ENCODE measurements at regions of chr7 and their contacts with region 1.

Region 1: DNA sequence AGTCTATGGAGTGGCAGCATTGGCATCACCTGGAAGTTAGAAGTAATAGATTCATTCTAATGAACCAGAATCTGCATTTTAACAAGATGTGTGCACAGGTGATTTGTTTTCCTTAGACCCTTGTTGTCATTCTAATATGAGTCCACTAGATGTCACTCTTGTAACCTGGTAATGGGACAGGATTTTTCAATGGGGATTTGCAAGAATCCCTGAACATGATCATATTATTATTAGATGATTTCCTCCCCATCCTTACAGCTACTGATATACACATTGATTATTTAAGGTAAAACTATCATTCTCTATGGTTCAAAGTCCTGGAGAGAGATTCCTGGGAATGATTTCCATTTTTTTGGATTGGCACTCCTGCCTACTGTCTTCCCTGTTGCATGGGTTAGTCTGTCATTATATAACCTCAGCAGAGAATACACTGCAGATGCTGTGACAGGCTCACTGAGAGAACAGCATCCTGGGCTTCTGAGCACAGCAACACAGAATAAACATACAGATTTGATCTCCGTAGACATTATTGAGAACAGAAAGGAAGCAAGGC is 194.9 kb downstream of the SUGCT start:
- DNase-seq: peak; percentile 41
- ATAC-seq: peak; percentile 58
- H3K4me3 ChIP-seq: no peak overlapping the region
- H3K27ac ChIP-seq: no peak overlapping the region
- H3K4me1 ChIP-seq: no peaks in the 10 kb centered on the region
- H3K27me3 ChIP-seq: no peaks in the 10 kb centered on the region
- CTCF ChIP-seq: peak; percentile 56 to 82 (median 60); a peak in 5 of 6 replicates
- POLR2A ChIP-seq: no peak
- RAD21 ChIP-seq: peak; percentile 83

Region 2: GRCh38 chr7:40033826-40034225 is 295.9 kb before region 1 on chr7:
- CTCF ChIA-PET with region 1: no interaction called
- POLR2A ChIA-PET with region 1: no interaction called
- RAD21 ChIA-PET with region 1: no interaction called
- intact Hi-C with region 1: no loop called
- DNase-seq: no peak
- ATAC-seq: no peak
- H3K4me3 ChIP-seq: no peak overlapping the region
- H3K27ac ChIP-seq: no peak overlapping the region
- H3K4me1 ChIP-seq: no peaks in the 10 kb centered on the region
- H3K27me3 ChIP-seq: no peaks in the 10 kb centered on the region
- CTCF ChIP-seq: no peak
- POLR2A ChIP-seq: no peak
- RAD21 ChIP-seq: no peak

Region 3: GRCh38 chr7:40604601-40605438 is 275.1 kb after region 1 on chr7:
- CTCF ChIA-PET with region 1: no interaction called
- POLR2A ChIA-PET with region 1: no interaction called
- RAD21 ChIA-PET with region 1: no interaction called
- intact Hi-C with region 1: loop called (anchors 1 kb)
- DNase-seq: peak; percentile 10
- ATAC-seq: peak; percentile 98
- H3K4me3 ChIP-seq: no peak overlapping the region
- H3K27ac ChIP-seq: no peak overlapping the region
- H3K4me1 ChIP-seq: no peaks in the 10 kb centered on the region
- H3K27me3 ChIP-seq: no peaks in the 10 kb centered on the region
- CTCF ChIP-seq: peak; percentile 53 to 81 (median 81); a peak in 5 of 6 replicates
- POLR2A ChIP-seq: no peak
- RAD21 ChIP-seq: peak; percentile 69

Region 4: DNA sequence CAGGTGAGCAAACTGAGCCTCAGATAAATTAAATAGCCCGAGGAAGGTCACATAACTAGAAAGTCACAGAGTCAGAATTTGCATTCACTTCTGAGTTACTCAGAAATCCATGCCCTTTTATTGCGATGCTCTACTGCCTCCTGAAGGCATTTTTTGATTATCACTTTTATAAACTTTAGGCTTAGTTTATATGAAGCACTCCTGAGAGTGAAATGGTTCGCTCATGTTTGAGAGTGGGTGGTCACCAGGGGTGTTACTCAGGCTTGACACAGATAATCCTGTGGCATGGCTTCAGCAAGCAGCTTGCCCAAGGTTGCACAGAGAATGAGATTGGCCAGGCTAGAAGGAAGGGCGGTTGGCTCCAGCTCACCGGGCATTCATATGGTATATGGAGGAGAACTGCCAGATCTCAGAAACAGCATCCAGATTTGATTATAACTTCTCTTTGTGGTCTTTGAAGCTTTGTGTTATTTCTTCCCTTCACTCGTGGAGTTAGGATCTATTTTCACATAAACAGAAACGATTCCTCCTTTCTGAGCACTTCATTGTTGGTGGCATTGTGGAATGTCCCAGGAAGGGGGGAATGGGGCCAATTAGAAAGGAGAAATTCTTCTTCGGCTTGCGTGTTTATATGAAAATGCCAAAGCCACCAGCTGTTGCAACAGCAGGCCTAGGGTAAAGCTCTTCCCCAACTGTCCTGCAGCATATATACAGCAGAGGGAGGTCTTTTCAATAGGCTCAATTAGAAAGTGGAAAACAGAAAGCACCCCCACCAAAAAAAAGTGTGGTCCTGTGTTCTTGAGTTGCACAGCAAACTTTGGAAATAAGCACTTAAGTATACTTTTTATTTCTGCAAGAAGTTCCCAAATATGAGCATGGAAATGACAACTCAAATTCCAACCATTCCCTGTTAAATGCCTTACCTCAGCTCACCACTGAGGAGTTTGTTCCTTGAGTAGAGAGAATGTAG is 433.9 kb after region 1 on chr7:
- CTCF ChIA-PET with region 1: no interaction called
- POLR2A ChIA-PET with region 1: no interaction called
- RAD21 ChIA-PET with region 1: no interaction called
- intact Hi-C with region 1: loop called (anchors 1 kb)
- DNase-seq: no peak
- ATAC-seq: peak; percentile 40
- H3K4me3 ChIP-seq: no peak overlapping the region
- H3K27ac ChIP-seq: no peak overlapping the region
- H3K4me1 ChIP-seq: no peaks in the 10 kb centered on the region
- H3K27me3 ChIP-seq: no peaks in the 10 kb centered on the region; the same call in 1 of the 2 replicates
- CTCF ChIP-seq: peak in 2 of 3 experiments; percentile 11 to 13; a peak in 1 of 6 replicates
- POLR2A ChIP-seq: no peak
- RAD21 ChIP-seq: peak; percentile 46

Region 5: GRCh38 chr7:41705109-41705901 is 1375.6 kb after region 1 on chr7:
- CTCF ChIA-PET with region 1: interaction called, 3 read pairs
- POLR2A ChIA-PET with region 1: no interaction called
- RAD21 ChIA-PET with region 1: no interaction called
- intact Hi-C with region 1: loop called (anchors 2 kb)
- DNase-seq: no peak
- ATAC-seq: peak; percentile 98
- H3K4me3 ChIP-seq: peak overlapping the region; percentile 41 to 52
- H3K27ac ChIP-seq: no peak overlapping the region; the same call in 1 of the 2 replicates
- H3K4me1 ChIP-seq: peaks cover 2 to 7% of the 10 kb centered on the region in 2 experiments; a peak in 2 of 4 replicates
- H3K27me3 ChIP-seq: no peaks in the 10 kb centered on the region
- CTCF ChIP-seq: peak; percentile 45 to 59 (median 57); a peak in 5 of 6 replicates
- POLR2A ChIP-seq: no peak
- RAD21 ChIP-seq: peak; percentile 78

Region 6: GRCh38 chr7:41731492-41732435 is 1402.1 kb after region 1 on chr7:
- CTCF ChIA-PET with region 1: interaction called, 4 read pairs
- POLR2A ChIA-PET with region 1: no interaction called
- RAD21 ChIA-PET with region 1: no interaction called
- intact Hi-C with region 1: loop called (anchors 2 kb)
- DNase-seq: peak; percentile 1
- ATAC-seq: no peak
- H3K4me3 ChIP-seq: no peak overlapping the region
- H3K27ac ChIP-seq: no peak overlapping the region
- H3K4me1 ChIP-seq: no peaks in the 10 kb centered on the region
- H3K27me3 ChIP-seq: 0 out of 2 replicates have a peak, but pooled peaks cover 6% of the 10 kb centered on the region
- CTCF ChIP-seq: peak in 2 of 3 experiments; percentile 27 to 50; a peak in 2 of 6 replicates
- POLR2A ChIP-seq: no peak
- RAD21 ChIP-seq: peak; percentile 59

Measured in HCT116 (cell line).